Endothelial cell of umbilical vein (primary cell): ENCODE measurements at regions of chr11 and their contacts with region 1.

Region 1: DNA sequence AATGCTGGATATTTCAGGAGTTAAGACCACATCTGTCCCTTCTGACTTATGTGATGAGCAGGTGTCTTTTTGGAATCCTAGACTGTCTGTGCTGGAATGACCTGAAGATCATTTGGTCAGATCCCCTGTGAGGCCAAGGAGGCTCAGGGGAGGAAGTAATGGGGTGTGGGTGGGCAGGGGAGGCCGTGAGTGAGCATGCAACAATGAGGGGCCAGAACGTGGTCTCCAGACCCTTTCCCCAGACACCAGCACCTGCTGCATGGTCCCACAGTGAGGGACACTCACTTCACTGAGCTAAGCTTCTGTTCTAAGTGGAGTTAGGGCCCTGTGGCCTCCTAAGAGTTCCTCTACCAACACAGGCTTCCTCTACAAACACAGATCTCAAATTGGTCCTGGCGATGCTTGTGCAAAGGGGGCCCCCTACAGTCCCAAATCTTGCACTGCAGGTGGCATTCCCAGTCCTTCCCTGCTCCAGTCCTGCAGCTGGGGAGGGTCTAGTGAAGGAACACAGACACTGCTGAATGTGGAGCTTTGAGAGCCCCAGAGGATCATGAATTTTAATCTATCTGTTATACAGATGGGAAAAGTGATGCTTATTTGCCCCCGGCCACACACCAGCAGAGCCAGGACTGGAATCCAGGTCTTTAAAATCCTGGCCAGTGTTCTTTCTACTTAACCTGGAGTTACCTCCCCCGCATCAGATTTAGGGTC is 7.4 kb downstream of the USP2 start:
- DNase-seq: peak; percentile 79
- H3K4me3 ChIP-seq: no peak overlapping the region
- H3K27ac ChIP-seq: no peak overlapping the region
- H3K4me1 ChIP-seq: no peaks in the 10 kb centered on the region
- H3K27me3 ChIP-seq: no peaks in the 10 kb centered on the region
- CTCF ChIP-seq: peak; percentile 90 to 92
- POLR2A ChIP-seq: no peak

Region 2: GRCh38 chr11:119284344-119285157 is 89.5 kb before region 1 on chr11:
- CTCF ChIA-PET with region 1: no interaction called
- POLR2A ChIA-PET with region 1: no interaction called
- dilution Hi-C with region 1: no loop called
- intact Hi-C with region 1: no loop called
- DNase-seq: peak; percentile 39
- H3K4me3 ChIP-seq: no peak overlapping the region
- H3K27ac ChIP-seq: no peak overlapping the region
- H3K4me1 ChIP-seq: no peaks in the 10 kb centered on the region
- H3K27me3 ChIP-seq: no peaks in the 10 kb centered on the region
- CTCF ChIP-seq: peak; percentile 11 to 29
- POLR2A ChIP-seq: no peak

Region 3: DNA sequence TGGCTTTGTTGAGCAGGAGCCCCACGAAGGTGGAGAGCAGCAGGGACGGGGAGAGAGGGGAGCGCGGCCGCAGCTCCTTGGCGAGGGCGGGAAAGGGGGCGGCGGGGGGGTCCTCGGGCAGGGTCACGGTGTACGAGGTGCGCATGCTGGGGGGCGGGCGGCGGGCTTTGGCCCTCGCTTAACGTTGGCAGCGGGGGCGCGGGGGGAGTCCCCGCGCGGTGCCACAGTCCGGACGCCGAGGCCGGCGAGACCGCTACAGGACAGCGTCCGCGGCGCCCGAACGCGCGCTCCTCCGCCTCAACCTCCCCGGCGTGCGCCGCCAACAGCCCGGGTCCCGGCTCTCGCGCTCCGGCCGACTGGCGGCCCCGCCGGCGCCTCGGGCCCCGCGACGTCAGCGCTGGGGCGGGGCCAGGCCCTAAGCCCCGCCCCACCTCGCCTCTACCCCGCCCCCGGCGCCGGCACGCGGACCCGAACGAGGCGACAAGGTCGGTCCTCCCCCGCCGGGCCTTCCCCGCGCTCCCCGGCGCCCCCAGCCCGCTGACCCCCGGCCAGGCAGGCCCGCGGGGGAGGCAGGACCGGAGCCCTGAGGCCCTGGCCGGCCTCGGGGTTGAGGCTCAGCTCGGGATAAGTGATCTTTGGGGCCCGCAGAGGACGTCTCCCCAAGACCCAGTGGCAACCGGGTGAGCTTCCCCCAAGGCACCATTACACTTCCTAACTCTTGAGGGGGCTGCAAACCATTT is 10.1 kb before region 1 on chr11:
- CTCF ChIA-PET with region 1: interaction called, 21 read pairs
- POLR2A ChIA-PET with region 1: no interaction called
- dilution Hi-C with region 1: no loop called
- intact Hi-C with region 1: no loop called
- DNase-seq: peak; percentile 39
- H3K4me3 ChIP-seq: peak overlapping the region in 1 of 3 experiments; percentile 33
- H3K27ac ChIP-seq: no peak overlapping the region
- H3K4me1 ChIP-seq: no peaks in the 10 kb centered on the region
- H3K27me3 ChIP-seq: peaks cover 12 to 20% of the 10 kb centered on the region in 2 experiments
- CTCF ChIP-seq: no peak
- POLR2A ChIP-seq: no peak

Region 4: GRCh38 chr11:119599864-119600541 is 225.9 kb after region 1 on chr11:
- CTCF ChIA-PET with region 1: no interaction called
- POLR2A ChIA-PET with region 1: no interaction called
- dilution Hi-C with region 1: no loop called
- intact Hi-C with region 1: no loop called
- DNase-seq: no peak
- H3K4me3 ChIP-seq: no peak overlapping the region
- H3K27ac ChIP-seq: no peak overlapping the region
- H3K4me1 ChIP-seq: peaks cover 12% of the 10 kb centered on the region
- H3K27me3 ChIP-seq: no peaks in the 10 kb centered on the region
- CTCF ChIP-seq: no peak
- POLR2A ChIP-seq: no peak